GM13977 (cell line): ENCODE measurements at regions of chr17 and their contacts with region 1.

Region 1: GRCh38 chr17:6913608-6914443 is 82.0 kb upstream of the ALOX12 start:
- DNase-seq: peak; percentile 75
- CTCF ChIP-seq: peak; percentile 87

Region 2: DNA sequence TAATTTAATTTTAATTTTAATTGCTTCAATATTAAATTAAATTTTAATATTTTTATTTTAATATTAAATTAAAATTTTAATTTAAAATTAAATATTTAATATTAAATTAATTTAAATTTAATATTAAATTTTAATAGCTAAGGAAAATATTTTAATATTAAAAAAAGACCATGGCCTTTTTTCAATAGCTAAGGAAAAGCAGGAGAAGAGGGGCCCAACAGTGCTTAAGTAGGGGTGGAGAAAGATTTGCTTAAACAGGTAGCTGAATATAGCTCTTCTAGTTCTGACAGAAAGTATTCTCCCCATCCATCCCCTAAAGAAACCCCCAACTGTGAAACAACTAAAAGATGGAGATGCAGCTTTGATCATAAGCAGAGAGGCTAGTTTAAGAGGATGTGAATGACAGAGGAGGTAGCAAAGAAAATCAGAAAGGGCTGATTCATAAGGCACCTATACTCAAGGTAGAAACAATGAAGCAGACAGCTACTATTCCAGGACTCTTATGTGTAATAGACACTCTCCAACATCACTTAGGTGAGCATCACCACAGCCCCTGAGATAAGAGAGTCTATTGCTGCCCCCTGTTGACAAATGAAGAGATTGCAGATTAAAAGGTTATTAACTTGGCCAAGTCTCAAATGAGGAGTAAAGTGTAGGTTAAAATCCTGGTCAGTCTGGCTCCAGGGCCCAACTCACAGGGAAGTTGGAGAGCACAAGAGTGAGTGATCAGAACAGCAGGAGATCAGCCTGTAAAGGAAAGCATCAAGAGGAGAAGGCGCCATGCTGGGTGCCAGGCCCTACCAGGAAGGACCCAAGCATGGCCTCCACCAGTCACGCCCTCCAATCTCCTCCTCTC is 90.8 kb after region 1 on chr17:
- in situ Hi-C with region 1: loop called (anchors 5 kb)
- DNase-seq: peak; percentile 75
- CTCF ChIP-seq: peak; percentile 72

Region 3: GRCh38 chr17:7136266-7136877 is 222.5 kb after region 1 on chr17:
- in situ Hi-C with region 1: loop called (anchors 25 kb)
- DNase-seq: peak; percentile 74
- CTCF ChIP-seq: peak; percentile 93